ENCODE measurements at regions of chr22 and their contacts with region 1.

Region 1: DNA sequence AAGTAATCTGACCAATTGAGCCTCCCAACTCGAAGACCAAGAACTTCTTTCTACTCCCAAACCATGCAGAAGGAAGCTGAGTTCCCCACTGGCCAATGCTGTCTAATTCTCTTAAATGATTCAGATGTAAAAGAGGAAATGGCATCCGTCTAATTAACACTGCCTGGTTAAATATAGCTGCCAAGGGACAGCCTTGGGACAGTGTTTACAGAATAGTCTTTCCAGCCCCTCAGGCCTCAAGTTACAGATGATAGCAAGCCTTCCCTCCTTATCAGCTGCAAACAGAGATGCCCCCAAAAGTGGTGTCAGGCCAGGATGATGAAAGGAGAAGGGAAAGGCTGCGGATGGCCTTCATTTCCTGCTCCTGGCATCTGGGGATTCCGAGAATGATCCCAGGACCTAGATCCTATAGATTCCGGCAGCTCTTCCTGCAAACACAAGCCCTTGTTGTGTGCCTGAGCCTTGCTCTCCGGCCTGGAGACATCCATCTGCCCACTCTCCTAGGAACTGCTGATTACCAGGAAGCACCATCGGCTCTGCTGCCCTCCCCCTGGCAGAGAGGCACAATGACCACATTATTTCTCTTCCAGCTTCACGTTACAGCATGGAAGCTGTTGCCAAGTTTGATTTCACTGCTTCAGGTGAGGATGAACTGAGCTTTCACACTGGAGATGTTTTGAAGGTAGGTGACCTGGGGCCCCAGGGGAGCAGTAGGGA is 13.5 kb upstream of the TMA7B start:
- DNase-seq: no peak
- ATAC-seq: no peak
- H3K4me3 Mint-ChIP-seq: peak overlapping the region; percentile 60 to 89 (median 75)
- H3K27ac Mint-ChIP-seq: peak overlapping the region in 6 of 10 donors; percentile 95 to 99 (median 97)
- H3K4me1 Mint-ChIP-seq: peaks cover 54 to 100% (median 98%) of the 10 kb centered on the region in 4 donors
- H3K27me3 Mint-ChIP-seq: no peaks in the 10 kb centered on the region

Region 2: GRCh38 chr22:39908737-39909136 is 37.9 kb before region 1 on chr22:
- POLR2A ChIA-PET with region 1: interaction called, 21 read pairs
- DNase-seq: peak in 1 of 10 donors; percentile 27
- ATAC-seq: peak; percentile 18 to 49
- H3K4me3 Mint-ChIP-seq: peak overlapping the region; percentile 79 to 99 (median 94)
- H3K27ac Mint-ChIP-seq: peak overlapping the region in 8 of 10 donors; percentile 94 to 99 (median 96)
- H3K4me1 Mint-ChIP-seq: peaks cover 52 to 86% (median 70%) of the 10 kb centered on the region in 4 donors
- H3K27me3 Mint-ChIP-seq: no peaks in the 10 kb centered on the region

Region 3: GRCh38 chr22:39917776-39918495 is 28.7 kb before region 1 on chr22:
- POLR2A ChIA-PET with region 1: interaction called, 14 read pairs
- DNase-seq: peak in 2 of 10 donors; percentile 51 to 61
- ATAC-seq: peak; percentile 12 to 13
- H3K4me3 Mint-ChIP-seq: peak overlapping the region; percentile 61 to 99 (median 84)
- H3K27ac Mint-ChIP-seq: peak overlapping the region in 8 of 10 donors; percentile 95 to 99 (median 96)
- H3K4me1 Mint-ChIP-seq: peaks cover 54 to 94% (median 90%) of the 10 kb centered on the region in 4 donors
- H3K27me3 Mint-ChIP-seq: no peaks in the 10 kb centered on the region

Region 4: GRCh38 chr22:39927544-39927943 is 19.1 kb before region 1 on chr22:
- POLR2A ChIA-PET with region 1: interaction called, 38 read pairs
- DNase-seq: no peak
- ATAC-seq: no peak
- H3K4me3 Mint-ChIP-seq: no peak overlapping the region
- H3K27ac Mint-ChIP-seq: no peak overlapping the region
- H3K4me1 Mint-ChIP-seq: peaks cover 31 to 54% (median 40%) of the 10 kb centered on the region in 4 donors
- H3K27me3 Mint-ChIP-seq: no peaks in the 10 kb centered on the region

Region 5: DNA sequence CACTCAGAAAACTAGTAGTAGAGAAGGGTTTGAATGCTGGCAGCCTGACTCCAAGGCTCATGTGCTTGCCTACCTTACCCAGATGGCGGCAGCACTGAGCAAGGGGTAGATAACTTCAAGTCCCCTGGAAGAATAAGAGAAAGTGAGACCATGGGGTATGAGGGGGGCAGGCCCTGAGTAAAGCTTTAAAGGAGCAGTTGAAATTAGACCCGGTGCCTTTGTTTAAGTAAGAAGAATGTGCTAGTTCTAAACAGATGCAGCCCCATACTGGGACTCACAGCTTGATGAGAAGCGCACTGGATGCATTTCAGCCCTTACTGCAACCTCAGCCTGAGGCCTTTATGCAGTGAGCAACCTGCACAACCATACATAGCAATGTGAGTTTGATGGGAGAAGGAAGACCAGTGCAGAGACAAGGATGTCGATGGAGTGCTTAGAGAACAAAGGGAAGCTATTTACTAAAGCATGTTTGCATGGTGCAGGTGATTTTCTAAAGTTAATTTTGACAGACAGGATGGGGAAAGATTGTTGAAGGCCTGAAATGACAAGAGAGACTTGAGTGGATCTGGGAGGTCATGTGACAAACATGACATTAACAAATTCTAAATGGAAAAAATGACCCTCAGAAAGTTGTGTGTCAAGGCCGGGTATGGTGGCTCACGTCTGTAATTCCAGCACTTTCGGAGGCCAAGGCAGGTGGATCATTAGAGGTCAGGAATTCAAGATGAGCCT is 13.6 kb before region 1 on chr22:
- POLR2A ChIA-PET with region 1: interaction called, 56 read pairs
- DNase-seq: peak; percentile 29 to 81 (median 64)
- ATAC-seq: peak; percentile 15 to 59
- H3K4me3 Mint-ChIP-seq: peak overlapping the region in 9 of 10 donors; percentile 68 to 94 (median 88)
- H3K27ac Mint-ChIP-seq: peak overlapping the region in 6 of 10 donors; percentile 95 to 99 (median 98)
- H3K4me1 Mint-ChIP-seq: peaks cover 43 to 67% (median 56%) of the 10 kb centered on the region in 4 donors
- H3K27me3 Mint-ChIP-seq: no peaks in the 10 kb centered on the region

Region 6: GRCh38 chr22:39960791-39961746 is 14.4 kb after region 1 on chr22:
- POLR2A ChIA-PET with region 1: interaction called, 16 read pairs
- DNase-seq: peak in 7 of 10 donors; percentile 32 to 68 (median 46)
- ATAC-seq: peak; percentile 68 to 77
- H3K4me3 Mint-ChIP-seq: peak overlapping the region in 9 of 10 donors; percentile 44 to 75 (median 48)
- H3K27ac Mint-ChIP-seq: peak overlapping the region in 8 of 10 donors; percentile 85 to 95 (median 94)
- H3K4me1 Mint-ChIP-seq: peaks cover 41 to 77% (median 68%) of the 10 kb centered on the region in 4 donors
- H3K27me3 Mint-ChIP-seq: no peaks in the 10 kb centered on the region

Region 7: GRCh38 chr22:40001800-40002577 is 55.3 kb after region 1 on chr22:
- POLR2A ChIA-PET with region 1: no interaction called
- DNase-seq: no peak
- ATAC-seq: no peak
- H3K4me3 Mint-ChIP-seq: no peak overlapping the region
- H3K27ac Mint-ChIP-seq: no peak overlapping the region
- H3K4me1 Mint-ChIP-seq: no peaks in the 10 kb centered on the region
- H3K27me3 Mint-ChIP-seq: peaks cover 0 to 8% (median 0%) of the 10 kb centered on the region in 5 donors